Adrenal gland (tissue), 19 donors: ENCODE measurements at regions of chr6 and their contacts with region 1.

Region 1: GRCh38 chr6:125197795-125198269 is 44.3 kb downstream of the TPD52L1 start:
- DNase-seq: peak; percentile 83 to 97 (median 96)
- H3K4me3 ChIP-seq: peak overlapping the region in 1 of 4 donors; percentile 4
- H3K27ac ChIP-seq: peak overlapping the region; percentile 63 to 85 (median 71)
- H3K4me1 ChIP-seq: peaks cover 86 to 87% of the 10 kb centered on the region in 2 donors
- H3K27me3 ChIP-seq: no peaks in the 10 kb centered on the region
- CTCF ChIP-seq: no peak
- POLR2A ChIP-seq: peak in 1 of 2 donors; percentile 43

Region 2: GRCh38 chr6:124747349-124747748 is 450.5 kb before region 1 on chr6:
- intact Hi-C with region 1: no loop called
- DNase-seq: no peak
- H3K4me3 ChIP-seq: no peak overlapping the region
- H3K27ac ChIP-seq: no peak overlapping the region
- H3K4me1 ChIP-seq: no peaks in the 10 kb centered on the region
- H3K27me3 ChIP-seq: no peaks in the 10 kb centered on the region
- CTCF ChIP-seq: no peak
- POLR2A ChIP-seq: no peak

Region 3: GRCh38 chr6:125301435-125302391 is 103.9 kb after region 1 on chr6 and contains the start of gene HDDC2:
- intact Hi-C with region 1: loop called in 1 of 2 experiments (anchors 5 kb)
- DNase-seq: peak; percentile 75 to 82 (median 78)
- H3K4me3 ChIP-seq: peak within 1 kb of the TSS; percentile 34 to 81 (median 58)
- H3K27ac ChIP-seq: peak within 1 kb of the TSS; percentile 43 to 94 (median 89)
- H3K4me1 ChIP-seq: peaks cover 25 to 34% of the 10 kb centered on the region in 2 donors
- H3K27me3 ChIP-seq: no peaks in the 10 kb centered on the region
- CTCF ChIP-seq: peak in 1 of 6 experiments; percentile 25
- POLR2A ChIP-seq: peak; percentile 46 to 80
- total RNA-seq, gene HDDC2: 94.2 to 166 (median 116) TPM